Calu3 (cell line): ENCODE measurements at regions of chr7 and their contacts with region 1.

Region 1: GRCh38 chr7:38451840-38452239 is 178.4 kb upstream of the TARP start:
- DNase-seq: no peak
- H3K4me3 Mint-ChIP-seq: no peak overlapping the region
- H3K27ac Mint-ChIP-seq: no peak overlapping the region
- H3K4me1 Mint-ChIP-seq: no peaks in the 10 kb centered on the region
- H3K27me3 Mint-ChIP-seq: peaks cover 52% of the 10 kb centered on the region
- CTCF ChIP-seq: no peak

Region 2: GRCh38 chr7:38630720-38631673 is 179.2 kb after region 1 on chr7 and contains the start of gene AMPH:
- CTCF ChIA-PET with region 1: no interaction called
- intact Hi-C with region 1: loop called (anchors 5 kb)
- DNase-seq: no peak
- H3K4me3 Mint-ChIP-seq: no peak within 1 kb of the TSS
- H3K27ac Mint-ChIP-seq: no peak within 1 kb of the TSS
- H3K4me1 Mint-ChIP-seq: no peaks in the 10 kb centered on the region
- H3K27me3 Mint-ChIP-seq: peaks cover 75% of the 10 kb centered on the region
- CTCF ChIP-seq: no peak
- total RNA-seq, gene AMPH: not detected in 2 replicates

Region 3: DNA sequence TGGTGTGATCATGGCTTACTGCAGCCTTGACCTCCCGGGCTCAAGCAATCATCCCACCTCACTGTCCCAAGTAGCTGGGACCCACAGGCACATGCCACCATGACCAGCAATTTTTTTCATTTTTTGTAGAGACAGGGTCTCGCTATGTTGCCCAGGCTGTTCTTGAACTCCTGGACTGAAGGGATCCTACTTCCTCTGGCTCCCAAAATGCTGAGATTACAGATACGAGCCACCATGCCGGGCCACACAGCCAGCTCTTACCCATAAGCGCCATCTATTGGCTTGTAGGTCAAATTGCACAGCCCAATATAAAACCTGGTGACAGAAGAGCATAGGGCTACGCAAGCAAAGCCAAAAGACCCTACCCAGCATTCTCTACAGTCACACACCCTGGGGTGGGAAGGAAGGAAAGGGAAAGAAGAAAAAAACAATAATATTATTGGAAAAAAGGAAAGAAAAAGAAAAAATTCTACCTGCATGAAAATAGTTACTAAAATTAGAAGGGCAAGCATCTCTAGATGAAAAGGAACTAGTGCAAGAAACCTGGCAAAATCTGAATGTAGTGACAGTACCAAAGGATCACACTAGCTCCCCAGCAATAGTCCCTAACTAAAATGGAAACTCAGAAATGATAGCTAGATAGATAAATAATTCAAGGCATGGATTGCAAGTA is 208.7 kb after region 1 on chr7:
- CTCF ChIA-PET with region 1: no interaction called
- intact Hi-C with region 1: loop called (anchors 1 kb)
- DNase-seq: peak; percentile 43
- H3K4me3 Mint-ChIP-seq: no peak overlapping the region
- H3K27ac Mint-ChIP-seq: no peak overlapping the region
- H3K4me1 Mint-ChIP-seq: no peaks in the 10 kb centered on the region
- H3K27me3 Mint-ChIP-seq: peaks cover 89% of the 10 kb centered on the region
- CTCF ChIP-seq: peak; percentile 68

Region 4: DNA sequence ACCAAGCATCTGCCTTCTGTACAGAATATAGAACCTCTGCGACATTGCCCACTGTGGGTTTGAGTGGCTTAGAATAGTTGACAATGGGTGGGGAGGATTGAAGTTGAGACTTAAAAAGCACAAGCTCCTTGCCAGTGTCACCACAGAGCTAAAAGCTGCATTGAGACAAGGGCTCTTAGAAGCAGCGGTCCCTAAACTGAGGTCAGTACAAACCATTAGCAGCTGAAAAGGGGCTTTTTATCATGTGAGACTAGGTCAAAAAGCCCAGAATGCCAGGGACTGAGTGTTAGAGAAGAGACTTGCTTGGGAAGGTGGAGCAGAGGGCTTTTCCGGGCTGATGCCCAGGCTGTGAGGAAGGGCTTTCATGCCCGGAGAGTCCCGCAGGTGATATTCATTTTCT is 617.2 kb after region 1 on chr7:
- CTCF ChIA-PET with region 1: no interaction called
- intact Hi-C with region 1: no loop called
- DNase-seq: no peak
- H3K4me3 Mint-ChIP-seq: no peak overlapping the region
- H3K27ac Mint-ChIP-seq: no peak overlapping the region
- H3K4me1 Mint-ChIP-seq: no peaks in the 10 kb centered on the region
- H3K27me3 Mint-ChIP-seq: no peaks in the 10 kb centered on the region
- CTCF ChIP-seq: no peak

Region 5: DNA sequence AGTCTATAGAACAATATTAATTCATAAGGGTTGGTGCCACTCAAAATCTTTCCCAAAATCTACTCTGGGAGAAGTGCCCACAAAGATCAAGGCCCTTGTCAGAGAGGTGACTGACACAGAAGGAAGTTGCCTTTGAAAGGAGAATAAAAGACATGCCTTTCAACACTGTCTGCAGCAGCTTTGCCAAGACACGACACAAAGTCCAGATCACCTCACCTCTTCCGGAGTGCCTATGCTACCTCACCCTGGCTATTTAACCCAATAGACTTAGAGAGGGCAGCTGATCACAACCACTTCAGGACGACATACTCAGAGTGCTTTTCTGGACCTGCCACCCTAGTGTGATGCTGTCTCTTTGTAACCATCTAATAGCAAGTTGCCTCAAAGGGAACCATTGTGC is 1065.4 kb after region 1 on chr7:
- CTCF ChIA-PET with region 1: no interaction called
- intact Hi-C with region 1: loop called (anchors 1 kb)
- DNase-seq: no peak
- H3K4me3 Mint-ChIP-seq: no peak overlapping the region
- H3K27ac Mint-ChIP-seq: no peak overlapping the region
- H3K4me1 Mint-ChIP-seq: no peaks in the 10 kb centered on the region
- H3K27me3 Mint-ChIP-seq: peaks cover 7% of the 10 kb centered on the region
- CTCF ChIP-seq: no peak